ENCODE measurements at regions of chr12 and their contacts with region 1.

Region 1: GRCh38 chr12:12654691-12655460 is 41.1 kb downstream of the GPR19 start:
- DNase-seq: no peak
- H3K4me3 ChIP-seq: no peak overlapping the region
- H3K27ac ChIP-seq: peak overlapping the region in 54 of 59 donors; percentile 1 to 90 (median 72)
- H3K27me3 ChIP-seq: no peaks in the 10 kb centered on the region
- CTCF ChIP-seq: no peak

Region 2: DNA sequence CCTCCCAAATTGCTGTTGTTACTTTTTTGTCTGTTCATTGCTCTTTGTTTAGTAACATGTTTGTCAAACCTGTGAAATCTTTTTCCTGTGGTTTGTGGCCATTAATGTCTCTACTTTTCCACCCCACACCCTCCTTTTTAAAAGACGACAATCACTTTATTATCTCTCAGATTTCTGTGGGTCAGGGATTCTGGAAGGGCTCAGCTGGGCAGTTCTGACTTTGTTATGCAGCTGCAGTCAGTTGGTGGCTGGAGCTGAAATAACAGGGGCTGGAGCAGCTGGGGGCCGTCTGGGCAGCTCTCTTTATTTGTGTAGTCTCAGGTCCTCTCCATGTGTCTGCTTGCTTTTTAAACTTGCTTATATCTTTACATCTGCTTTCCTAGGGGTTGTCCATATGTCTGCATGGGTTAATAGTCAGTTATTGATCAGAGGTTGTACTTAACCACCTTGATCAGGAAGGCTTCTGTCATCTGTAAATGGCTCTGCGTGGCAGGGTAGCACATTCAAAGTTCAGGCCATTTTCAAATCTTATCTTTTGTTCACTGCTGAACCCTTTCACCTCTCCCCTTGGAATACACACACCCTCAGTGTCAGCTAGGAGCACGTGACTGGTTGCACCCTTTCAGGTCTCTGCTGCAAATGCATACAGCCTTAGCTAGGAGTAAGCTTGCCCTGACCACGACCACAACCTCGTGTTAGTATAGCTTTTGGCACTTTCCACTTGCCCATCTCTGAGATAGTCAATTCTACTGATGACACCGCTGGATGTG is 270.1 kb before region 1 on chr12:
- intact Hi-C with region 1: loop called in 1 of 2 experiments (anchors 5 kb)
- DNase-seq: peak in 6 of 10 donors; percentile 20 to 58 (median 48)
- H3K4me3 ChIP-seq: peak overlapping the region in 4 of 59 donors; percentile 1 to 34 (median 28)
- H3K27ac ChIP-seq: peak overlapping the region in 56 of 59 donors; percentile 5 to 91 (median 76)
- H3K27me3 ChIP-seq: no peaks in the 10 kb centered on the region
- CTCF ChIP-seq: peak in 1 of 56 donors; percentile 8

Region 3: DNA sequence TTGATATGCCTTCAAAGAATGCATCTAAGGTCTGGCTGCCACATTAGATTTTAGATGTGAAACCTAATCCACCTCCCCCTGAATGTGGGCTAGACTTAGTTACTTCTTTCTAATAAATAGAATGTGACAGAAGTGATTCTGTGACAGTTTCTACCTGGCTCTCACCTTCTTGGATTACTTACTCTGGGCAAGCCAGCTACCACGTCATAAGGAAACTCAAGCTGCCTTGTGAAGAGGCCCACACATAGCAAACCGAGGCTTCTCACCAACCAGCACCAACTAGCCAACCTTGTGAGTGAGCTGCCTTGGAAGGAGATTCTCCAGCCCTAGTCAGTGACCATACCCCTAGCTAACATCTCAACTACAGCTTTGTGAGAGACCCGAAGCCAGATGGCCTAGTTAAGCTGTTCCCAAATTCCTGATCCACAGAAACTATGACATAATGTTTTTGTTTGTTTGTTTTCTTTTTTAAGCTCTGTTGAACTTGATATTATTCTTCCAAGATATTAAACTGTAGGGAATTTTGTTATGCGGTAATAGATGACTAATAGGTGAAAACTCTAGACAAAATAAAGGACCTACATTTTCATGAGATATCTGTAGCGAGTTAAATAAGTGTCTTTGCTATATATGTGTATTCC is 34.9 kb after region 1 on chr12:
- intact Hi-C with region 1: loop called (anchors 2 to 5 kb)
- DNase-seq: no peak
- H3K4me3 ChIP-seq: no peak overlapping the region
- H3K27ac ChIP-seq: no peak overlapping the region
- H3K27me3 ChIP-seq: no peaks in the 10 kb centered on the region
- CTCF ChIP-seq: no peak

Region 4: DNA sequence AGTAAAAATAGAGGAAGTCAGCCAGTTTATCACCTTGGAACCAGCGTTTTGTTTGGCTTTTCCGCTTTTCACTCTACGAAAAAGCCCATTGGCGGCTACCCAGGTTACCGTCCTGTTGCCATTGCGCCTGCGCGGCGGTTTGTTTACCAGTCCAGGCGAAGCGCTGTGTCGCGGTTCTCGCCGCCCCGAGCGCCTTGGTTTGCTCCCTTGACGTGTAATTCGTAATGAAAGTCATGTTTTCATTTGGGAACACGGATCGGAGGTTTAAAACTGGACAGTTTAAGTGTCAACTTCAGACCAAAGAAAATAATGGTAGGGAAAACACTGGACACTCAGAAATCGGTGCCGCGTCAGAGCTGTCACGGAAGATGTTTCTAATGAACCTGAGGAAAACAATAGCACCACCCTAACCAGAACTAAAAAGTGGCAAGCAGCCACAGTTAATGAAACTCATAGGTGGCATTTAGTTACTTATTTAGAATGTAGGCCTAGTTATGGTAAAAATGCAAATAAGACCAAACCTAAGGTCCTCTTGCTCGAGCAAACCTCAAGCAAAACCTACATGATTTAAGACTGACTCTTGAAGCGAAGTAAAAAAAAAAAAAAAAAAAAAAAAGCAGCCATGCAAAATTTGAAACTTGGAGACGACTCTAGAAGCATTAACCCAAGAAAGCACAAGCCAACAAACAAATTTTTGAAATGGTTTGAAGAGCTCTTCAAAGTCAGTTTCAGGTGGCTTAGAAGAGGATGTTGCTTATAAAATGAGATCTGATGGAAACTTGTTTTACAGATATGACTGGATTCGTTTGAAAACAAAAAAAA is 41.9 kb after region 1 on chr12:
- intact Hi-C with region 1: loop called (anchors 2 to 5 kb)
- DNase-seq: peak; percentile 84 to 91 (median 90)
- H3K4me3 ChIP-seq: peak overlapping the region; percentile 36 to 87 (median 68)
- H3K27ac ChIP-seq: peak overlapping the region; percentile 89 to 100 (median 99)
- H3K27me3 ChIP-seq: no peaks in the 10 kb centered on the region
- CTCF ChIP-seq: peak in 17 of 56 donors; percentile 2 to 44 (median 9)